GM10248 (cell line): ENCODE measurements at regions of chr2 and their contacts with region 1.

Region 1: DNA sequence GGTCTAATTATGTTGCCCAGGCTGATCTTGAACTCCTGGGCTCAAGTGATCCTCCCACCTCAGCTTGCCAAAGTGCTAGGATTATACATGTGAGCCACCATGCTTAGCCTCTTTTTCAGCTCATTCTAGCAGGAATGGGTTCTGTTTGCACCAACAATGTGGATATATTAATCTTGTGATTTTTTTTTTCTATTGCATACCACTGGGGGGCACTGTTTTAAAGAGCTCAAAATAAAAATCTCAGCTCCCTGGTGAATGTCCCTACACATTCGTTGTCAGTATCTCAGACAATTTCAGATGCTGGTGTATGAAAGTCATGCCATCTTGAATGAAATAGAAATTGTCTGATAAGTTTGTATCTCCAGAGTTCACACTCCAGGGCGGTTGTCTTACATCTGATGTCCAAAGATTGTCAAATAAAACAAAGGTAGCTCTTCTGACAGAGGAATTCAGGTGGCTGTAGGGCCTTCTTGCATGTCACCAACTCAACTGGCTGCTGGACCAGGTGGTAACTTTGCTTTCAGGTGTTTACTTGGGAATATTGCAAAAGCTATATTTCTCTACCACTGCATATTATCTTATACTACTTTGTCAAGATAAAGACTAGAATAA is 3.1 kb upstream of the MATN3 start:
- DNase-seq: peak; percentile 58
- CTCF ChIP-seq: peak; percentile 45

Region 2: GRCh38 chr2:19987936-19988335 is 27.6 kb before region 1 on chr2:
- CTCF ChIA-PET with region 1: interaction called, 11 read pairs
- POLR2A ChIA-PET with region 1: no interaction called
- DNase-seq: peak; percentile 56
- CTCF ChIP-seq: no peak

Region 3: DNA sequence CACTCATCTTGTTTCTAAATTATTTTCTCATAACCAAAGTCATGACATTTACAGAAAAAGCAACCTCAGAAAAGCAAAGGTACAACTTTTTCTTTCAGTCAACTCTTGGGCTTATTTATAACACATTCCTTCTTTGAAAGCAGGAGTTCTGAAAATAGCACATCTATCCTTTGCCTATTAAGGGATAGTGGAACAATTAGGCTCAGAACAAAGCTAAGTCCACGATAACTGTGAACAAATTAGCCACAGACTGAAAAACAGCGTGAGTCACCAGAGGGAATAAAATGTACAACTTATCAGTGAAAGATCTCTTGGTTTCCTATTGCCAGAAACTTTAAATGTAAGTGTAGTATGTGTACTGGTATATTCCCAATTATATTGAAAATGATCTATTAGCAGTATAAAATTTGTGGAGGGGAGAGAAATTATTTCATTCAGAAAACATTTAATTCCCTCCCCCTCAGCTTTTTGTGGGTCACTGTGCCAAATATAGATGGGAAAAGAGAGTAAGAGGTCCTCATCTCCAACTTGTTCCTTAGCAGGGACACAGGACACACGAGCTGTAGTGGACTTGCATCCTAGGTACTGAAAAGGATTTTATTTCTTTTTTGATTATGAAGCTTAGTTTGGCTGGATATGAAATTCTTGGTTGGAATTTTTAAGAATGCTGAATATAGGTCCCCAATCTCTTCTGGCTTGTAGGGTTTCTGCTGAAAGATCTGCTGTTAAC is 12.3 kb after region 1 on chr2:
- CTCF ChIA-PET with region 1: interaction called, 55 read pairs
- POLR2A ChIA-PET with region 1: no interaction called
- DNase-seq: no peak
- CTCF ChIP-seq: no peak

Region 4: GRCh38 chr2:20061476-20061875 is 45.9 kb after region 1 on chr2:
- CTCF ChIA-PET with region 1: interaction called, 12 read pairs
- POLR2A ChIA-PET with region 1: no interaction called
- DNase-seq: no peak
- CTCF ChIP-seq: no peak

Region 5: DNA sequence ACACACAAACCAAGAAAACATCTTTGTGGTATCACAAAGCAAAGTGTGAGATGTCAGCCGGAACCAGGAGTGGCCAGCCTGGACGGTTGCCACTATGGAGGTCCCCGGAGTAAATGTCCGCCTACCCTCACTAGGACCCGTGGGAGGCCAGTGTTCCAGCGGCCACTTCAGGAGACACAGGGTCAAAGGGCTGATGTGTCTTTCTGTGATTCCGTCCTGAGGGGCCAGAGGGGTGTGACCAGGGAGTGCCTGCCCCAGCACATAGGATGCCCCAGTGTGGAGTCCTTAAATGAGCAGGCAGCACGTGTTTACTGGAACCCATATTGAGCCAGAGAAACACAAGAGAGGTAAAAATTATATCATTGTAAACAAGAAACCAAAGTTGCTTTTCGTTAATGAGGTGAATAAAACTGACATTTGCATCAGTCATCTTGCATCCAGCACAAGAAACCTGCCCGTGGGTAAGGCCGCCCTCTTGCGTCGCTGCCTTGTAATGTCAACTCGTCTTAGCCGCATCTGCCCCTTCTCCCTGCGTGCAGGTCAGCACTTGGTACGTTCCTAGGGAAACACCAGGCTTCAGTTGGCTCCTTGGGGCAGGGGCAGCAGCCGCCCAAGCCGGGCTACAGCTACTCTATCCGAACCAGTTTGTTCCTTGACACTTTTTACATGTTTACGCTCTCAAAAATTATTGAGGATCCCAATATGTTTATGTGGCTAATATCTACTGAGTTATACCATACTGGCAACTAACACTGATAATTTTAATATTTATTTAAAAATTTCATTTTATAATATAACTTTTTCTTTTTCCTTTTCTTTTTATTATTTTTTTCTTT is 82.5 kb after region 1 on chr2:
- CTCF ChIA-PET with region 1: interaction called, 21 read pairs
- POLR2A ChIA-PET with region 1: no interaction called
- DNase-seq: peak; percentile 86
- CTCF ChIP-seq: peak; percentile 80

Region 6: DNA sequence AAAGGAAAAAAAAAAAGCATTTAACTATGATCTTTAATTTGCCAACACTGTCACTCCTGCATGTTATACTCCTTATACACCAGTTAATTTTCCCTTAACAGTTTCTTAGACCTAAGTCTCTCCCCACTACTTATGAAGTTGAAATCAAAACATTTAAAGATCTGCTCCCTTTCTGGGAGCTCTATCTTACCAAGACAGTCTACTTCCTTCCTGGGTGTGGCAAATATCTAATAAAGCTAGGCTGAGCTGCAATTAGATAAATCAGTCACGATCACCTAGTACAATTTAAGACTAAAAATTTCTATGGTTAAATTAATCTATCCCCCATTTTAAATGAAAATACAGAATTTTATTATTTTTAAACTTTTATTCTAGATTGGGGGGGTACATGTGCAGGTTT is 301.6 kb after region 1 on chr2:
- CTCF ChIA-PET with region 1: no interaction called
- POLR2A ChIA-PET with region 1: no interaction called
- DNase-seq: no peak
- CTCF ChIP-seq: no peak